PC-9 (cell line): ENCODE measurements at regions of chr3 and their contacts with region 1.

Region 1: GRCh38 chr3:182746959-182747358 is 46.3 kb upstream of the ATP11B start:
- DNase-seq: no peak
- H3K4me3 ChIP-seq: no peak overlapping the region
- H3K27ac ChIP-seq: no peak overlapping the region
- H3K4me1 ChIP-seq: peaks cover 25% of the 10 kb centered on the region
- H3K27me3 ChIP-seq: no peaks in the 10 kb centered on the region
- CTCF ChIP-seq: no peak

Region 2: GRCh38 chr3:182609575-182610156 is 137.3 kb before region 1 on chr3:
- CTCF ChIA-PET with region 1: no interaction called
- POLR2A ChIA-PET with region 1: no interaction called
- intact Hi-C with region 1: no loop called
- DNase-seq: peak; percentile 78 to 98
- H3K4me3 ChIP-seq: peak overlapping the region; percentile 2; the same call in 1 of the 2 replicates
- H3K27ac ChIP-seq: peak overlapping the region; percentile 80
- H3K4me1 ChIP-seq: peaks cover 39% of the 10 kb centered on the region
- H3K27me3 ChIP-seq: no peaks in the 10 kb centered on the region
- CTCF ChIP-seq: no peak

Region 3: DNA sequence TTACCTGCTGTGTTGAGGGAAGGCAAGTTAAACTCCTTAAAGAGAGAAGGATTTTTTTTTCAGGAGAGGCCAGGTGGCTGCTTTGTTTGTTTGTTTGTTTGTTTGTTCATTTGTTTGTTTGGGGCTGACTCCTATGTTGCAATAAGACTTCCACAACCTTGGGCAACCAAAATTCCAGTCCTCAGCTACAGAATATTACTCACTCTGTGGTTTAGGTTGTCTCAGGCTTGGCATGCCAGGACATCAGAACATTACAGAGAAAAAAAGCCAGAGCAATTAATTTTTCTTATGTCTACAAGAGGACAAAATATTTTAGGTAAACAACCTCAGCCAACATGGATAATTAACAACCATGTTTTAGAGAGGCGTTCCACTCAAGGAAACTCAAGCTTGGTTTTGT is 110.3 kb before region 1 on chr3:
- CTCF ChIA-PET with region 1: no interaction called
- POLR2A ChIA-PET with region 1: no interaction called
- intact Hi-C with region 1: no loop called
- DNase-seq: peak in 1 of 2 experiments; percentile 92
- H3K4me3 ChIP-seq: no peak overlapping the region
- H3K27ac ChIP-seq: peak overlapping the region; percentile 25; the same call in 1 of the 2 replicates
- H3K4me1 ChIP-seq: peaks cover 34% of the 10 kb centered on the region
- H3K27me3 ChIP-seq: no peaks in the 10 kb centered on the region
- CTCF ChIP-seq: no peak

Region 4: GRCh38 chr3:182829761-182830405 is 82.9 kb after region 1 on chr3:
- CTCF ChIA-PET with region 1: no interaction called
- POLR2A ChIA-PET with region 1: interaction called, 13 read pairs
- intact Hi-C with region 1: no loop called
- DNase-seq: peak in 1 of 2 experiments; percentile 37
- H3K4me3 ChIP-seq: no peak overlapping the region
- H3K27ac ChIP-seq: no peak overlapping the region
- H3K4me1 ChIP-seq: no peaks in the 10 kb centered on the region
- H3K27me3 ChIP-seq: no peaks in the 10 kb centered on the region
- CTCF ChIP-seq: no peak

Region 5: GRCh38 chr3:182889948-182890629 is 143.1 kb after region 1 on chr3:
- CTCF ChIA-PET with region 1: interaction called, 24 read pairs
- POLR2A ChIA-PET with region 1: no interaction called
- intact Hi-C with region 1: no loop called
- DNase-seq: peak in 1 of 2 experiments; percentile 57
- H3K4me3 ChIP-seq: no peak overlapping the region
- H3K27ac ChIP-seq: no peak overlapping the region
- H3K4me1 ChIP-seq: peaks cover 16% of the 10 kb centered on the region
- H3K27me3 ChIP-seq: no peaks in the 10 kb centered on the region
- CTCF ChIP-seq: no peak

Region 6: GRCh38 chr3:182921665-182922355 is 174.9 kb after region 1 on chr3:
- CTCF ChIA-PET with region 1: no interaction called
- POLR2A ChIA-PET with region 1: interaction called, 13 read pairs
- intact Hi-C with region 1: no loop called
- DNase-seq: no peak
- H3K4me3 ChIP-seq: no peak overlapping the region
- H3K27ac ChIP-seq: 0 out of 2 replicates have a peak overlapping the region, but pooled peaks have one; percentile 1
- H3K4me1 ChIP-seq: no peaks in the 10 kb centered on the region
- H3K27me3 ChIP-seq: no peaks in the 10 kb centered on the region
- CTCF ChIP-seq: no peak

Region 7: GRCh38 chr3:182980204-182981037 is 233.5 kb after region 1 on chr3 and contains the start of gene DCUN1D1:
- CTCF ChIA-PET with region 1: no interaction called
- POLR2A ChIA-PET with region 1: no interaction called
- intact Hi-C with region 1: no loop called
- DNase-seq: peak; percentile 79 to 97
- H3K4me3 ChIP-seq: peak within 1 kb of the TSS; percentile 68
- H3K27ac ChIP-seq: no peak within 1 kb of the TSS
- H3K4me1 ChIP-seq: peaks cover 20% of the 10 kb centered on the region
- H3K27me3 ChIP-seq: no peaks in the 10 kb centered on the region
- CTCF ChIP-seq: no peak
- total RNA-seq, gene DCUN1D1: 80.3 and 93.5 TPM in 2 replicates